PC-9 (cell line): ENCODE measurements at regions of chr1 and their contacts with region 1.

Region 1: GRCh38 chr1:160098852-160099561 is 588 bp upstream of the IGSF8 start:
- DNase-seq: peak; percentile 76 to 95
- H3K4me3 ChIP-seq: peak overlapping the region; percentile 60
- H3K27ac ChIP-seq: no peak overlapping the region; the same call in 1 of the 2 replicates
- H3K4me1 ChIP-seq: peaks cover 34% of the 10 kb centered on the region
- H3K27me3 ChIP-seq: no peaks in the 10 kb centered on the region
- CTCF ChIP-seq: no peak

Region 2: DNA sequence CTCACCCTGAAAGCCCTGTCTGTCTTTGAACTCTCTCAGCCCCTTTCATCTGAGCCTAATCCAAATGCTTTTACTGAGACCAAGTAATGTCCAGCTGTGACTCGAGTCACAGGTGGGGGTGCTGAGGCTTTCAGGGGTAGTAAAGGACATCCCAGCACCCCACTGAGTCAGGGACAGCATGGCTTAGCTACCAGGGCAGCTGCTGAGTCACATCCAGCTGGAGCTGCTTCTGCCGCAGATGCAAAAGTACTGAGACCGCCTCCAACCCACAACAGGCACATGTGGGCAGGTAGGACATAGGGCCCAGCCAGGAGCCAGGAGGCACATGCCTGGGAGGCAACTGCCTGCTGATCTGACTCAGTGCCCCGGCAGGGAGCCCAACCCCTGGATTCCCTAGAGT is 229.8 kb before region 1 on chr1:
- CTCF ChIA-PET with region 1: no interaction called
- POLR2A ChIA-PET with region 1: interaction called, 12 read pairs
- intact Hi-C with region 1: no loop called
- DNase-seq: peak; percentile 54 to 55
- H3K4me3 ChIP-seq: no peak overlapping the region
- H3K27ac ChIP-seq: no peak overlapping the region
- H3K4me1 ChIP-seq: peaks cover 17% of the 10 kb centered on the region
- H3K27me3 ChIP-seq: no peaks in the 10 kb centered on the region
- CTCF ChIP-seq: no peak

Region 3: GRCh38 chr1:160124705-160125478 is 25.9 kb after region 1 on chr1:
- CTCF ChIA-PET with region 1: interaction called, 4 read pairs
- POLR2A ChIA-PET with region 1: interaction called, 6 read pairs
- intact Hi-C with region 1: loop called (anchors 1 kb)
- DNase-seq: peak; percentile 79 to 100
- H3K4me3 ChIP-seq: peak overlapping the region; percentile 8; the same call in 1 of the 2 replicates
- H3K27ac ChIP-seq: peak overlapping the region; percentile 89
- H3K4me1 ChIP-seq: peaks cover 48% of the 10 kb centered on the region
- H3K27me3 ChIP-seq: no peaks in the 10 kb centered on the region
- CTCF ChIP-seq: peak; percentile 52; the same call in 1 of the 2 replicates

Region 4: DNA sequence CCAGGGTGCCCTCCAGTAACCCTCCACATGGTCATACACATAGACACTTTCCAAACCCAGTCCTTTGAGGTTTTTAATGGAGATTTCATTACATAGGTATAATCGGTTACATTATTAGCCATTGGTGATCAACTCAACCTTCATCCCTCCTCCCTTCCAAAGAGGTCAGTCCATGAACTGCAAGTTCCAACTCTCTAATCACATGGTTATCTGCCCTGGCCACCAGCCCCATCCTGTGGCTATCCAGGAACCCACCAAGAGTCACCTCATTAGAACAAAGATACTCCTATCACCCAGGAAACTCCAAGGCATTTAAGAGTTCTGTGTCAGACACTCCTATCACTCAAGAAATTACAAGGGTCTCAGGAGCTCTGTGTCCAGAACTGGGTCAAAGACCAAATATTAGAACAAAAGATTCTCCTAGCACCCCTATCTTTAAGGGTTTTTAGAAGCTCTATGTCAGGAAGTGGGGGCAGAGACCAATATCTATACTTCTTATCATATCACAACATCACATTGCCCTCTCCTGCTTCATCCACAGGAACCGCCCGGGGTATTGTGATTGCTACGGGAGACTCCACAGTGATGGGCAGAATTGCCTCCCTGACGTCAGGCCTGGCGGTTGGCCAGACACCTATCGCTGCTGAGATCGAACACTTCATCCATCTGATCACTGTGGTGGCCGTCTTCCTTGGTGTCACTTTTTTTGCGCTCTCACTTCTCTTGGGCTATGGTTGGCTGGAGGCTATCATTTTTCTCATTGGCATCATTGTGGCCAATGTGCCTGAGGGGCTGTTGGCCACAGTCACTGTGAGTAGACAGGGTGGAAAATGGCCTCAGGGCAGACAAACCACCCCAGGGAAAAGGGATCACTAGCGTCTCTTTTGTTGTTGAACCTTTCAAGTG is 64.9 kb after region 1 on chr1:
- CTCF ChIA-PET with region 1: no interaction called
- POLR2A ChIA-PET with region 1: interaction called, 3 read pairs
- intact Hi-C with region 1: loop called (anchors 1 kb)
- DNase-seq: no peak
- H3K4me3 ChIP-seq: no peak overlapping the region
- H3K27ac ChIP-seq: no peak overlapping the region
- H3K4me1 ChIP-seq: peaks cover 19% of the 10 kb centered on the region; the same call in 1 of the 2 replicates
- H3K27me3 ChIP-seq: no peaks in the 10 kb centered on the region
- CTCF ChIP-seq: peak; percentile 46

Region 5: DNA sequence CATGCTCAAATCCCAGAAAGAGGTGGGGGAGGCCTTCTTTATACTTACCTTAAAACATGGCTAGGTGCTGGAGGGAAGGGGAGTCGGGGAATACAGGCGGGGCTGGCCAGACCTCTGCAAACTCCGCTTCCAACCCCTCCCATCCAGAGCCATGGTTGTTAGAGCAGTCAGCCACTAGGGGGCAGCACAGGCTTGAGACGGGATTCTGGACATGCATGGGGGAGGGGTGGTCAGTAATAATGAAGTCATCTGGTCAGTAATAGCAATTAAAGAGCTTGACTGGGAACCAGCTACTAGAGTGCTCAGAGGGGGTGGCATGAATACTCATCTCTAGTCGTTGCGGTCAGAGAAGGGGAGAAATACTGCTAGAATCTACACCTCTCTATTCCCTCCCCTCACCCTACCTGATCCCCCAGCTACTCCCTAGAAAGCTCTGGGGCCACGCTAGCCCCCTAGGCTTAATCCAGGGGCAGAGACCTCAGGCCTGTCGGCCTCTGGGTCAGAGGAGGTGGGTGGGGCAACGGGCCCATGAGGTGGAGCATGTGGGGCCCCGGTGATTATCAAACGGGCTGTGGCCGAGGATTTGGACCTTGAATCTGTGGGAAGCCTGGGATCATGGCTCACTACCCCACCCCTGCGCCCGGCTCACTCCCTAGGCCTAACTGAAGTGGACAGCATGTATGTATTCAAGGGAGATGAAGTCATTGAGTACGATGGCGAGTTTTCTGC is 94.2 kb after region 1 on chr1:
- CTCF ChIA-PET with region 1: interaction called, 6 read pairs
- POLR2A ChIA-PET with region 1: interaction called, 8 read pairs
- intact Hi-C with region 1: loop called (anchors 1 kb)
- DNase-seq: peak; percentile 54 to 78
- H3K4me3 ChIP-seq: no peak overlapping the region
- H3K27ac ChIP-seq: no peak overlapping the region
- H3K4me1 ChIP-seq: no peaks in the 10 kb centered on the region
- H3K27me3 ChIP-seq: no peaks in the 10 kb centered on the region
- CTCF ChIP-seq: peak; percentile 96

Region 6: DNA sequence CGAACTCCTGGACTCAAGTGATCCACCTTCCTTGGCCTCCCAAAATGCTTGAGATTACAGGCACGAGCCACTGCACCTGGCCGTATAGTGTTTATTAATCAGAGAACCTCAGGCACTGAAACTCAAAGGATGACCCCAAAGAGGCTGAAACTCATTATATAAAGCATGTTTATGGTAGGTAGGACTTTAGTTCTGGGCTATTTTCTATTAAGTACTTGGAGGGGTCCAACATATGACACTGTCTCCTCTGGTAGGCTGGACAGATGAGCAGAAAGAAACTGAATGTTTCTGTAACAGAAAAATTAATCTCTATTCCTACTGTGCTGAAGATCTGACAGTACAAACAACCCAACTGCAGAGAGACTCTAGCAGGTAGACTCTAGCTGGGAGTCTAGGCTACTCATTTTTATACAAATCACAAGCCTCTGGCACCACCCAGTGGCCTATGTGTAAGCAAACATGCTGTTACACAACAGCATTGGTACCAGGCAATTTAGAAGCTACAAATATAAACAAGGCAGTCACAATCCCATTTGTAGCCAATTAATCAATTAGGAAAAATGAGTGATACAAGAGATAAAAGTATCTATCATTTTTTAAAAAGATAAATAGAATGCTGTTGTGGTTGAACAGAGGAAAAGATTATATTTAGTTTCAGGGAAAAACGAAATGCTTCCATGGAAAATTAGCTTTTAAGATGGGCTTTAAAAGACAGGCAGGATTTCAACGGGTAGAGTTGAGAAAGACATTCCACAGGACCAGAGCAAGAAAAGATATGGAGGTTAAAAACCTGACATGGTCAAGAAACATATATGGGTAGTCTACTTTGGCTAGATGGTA is 152.9 kb after region 1 on chr1:
- CTCF ChIA-PET with region 1: interaction called, 5 read pairs
- POLR2A ChIA-PET with region 1: interaction called, 3 read pairs
- intact Hi-C with region 1: loop called (anchors 1 kb)
- DNase-seq: peak; percentile 33 to 71
- H3K4me3 ChIP-seq: no peak overlapping the region
- H3K27ac ChIP-seq: no peak overlapping the region
- H3K4me1 ChIP-seq: peaks cover 9% of the 10 kb centered on the region
- H3K27me3 ChIP-seq: no peaks in the 10 kb centered on the region
- CTCF ChIP-seq: peak; percentile 81

Region 7: DNA sequence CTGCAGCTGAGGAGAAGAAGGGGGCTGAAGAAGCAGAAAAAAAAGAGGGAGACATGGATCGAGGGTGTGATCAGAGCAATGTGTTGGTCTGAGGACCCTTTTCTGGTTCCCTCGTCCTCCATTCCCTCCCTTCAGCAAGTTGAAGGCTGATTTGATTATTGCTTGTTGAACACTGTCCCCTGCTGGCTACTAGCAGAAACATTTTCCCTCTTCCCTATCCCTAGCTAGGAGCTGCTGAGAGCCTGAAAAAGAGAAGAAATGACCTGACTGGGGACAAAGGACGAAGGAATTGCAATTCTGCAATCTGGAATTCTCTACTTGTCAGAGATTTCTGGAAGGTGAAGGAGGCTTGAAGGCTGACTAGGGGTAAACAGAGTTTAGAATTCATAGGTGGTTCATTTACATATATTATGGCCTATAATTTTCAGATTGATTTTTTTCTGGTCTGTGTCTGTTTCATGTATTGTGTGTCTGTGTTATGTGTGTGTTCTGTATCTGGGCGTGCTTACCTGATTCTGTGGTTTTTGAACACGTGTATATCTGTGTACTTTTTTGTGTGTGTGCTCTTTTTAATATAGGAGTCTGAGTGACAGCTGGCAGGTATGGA is 277.6 kb after region 1 on chr1:
- CTCF ChIA-PET with region 1: no interaction called
- POLR2A ChIA-PET with region 1: no interaction called
- intact Hi-C with region 1: loop called (anchors 1 kb)
- DNase-seq: peak; percentile 20 to 60
- H3K4me3 ChIP-seq: no peak overlapping the region
- H3K27ac ChIP-seq: no peak overlapping the region
- H3K4me1 ChIP-seq: peaks cover 10% of the 10 kb centered on the region
- H3K27me3 ChIP-seq: no peaks in the 10 kb centered on the region
- CTCF ChIP-seq: peak; percentile 87